HCT116 (cell line): ENCODE measurements at regions of chr5 and their contacts with region 1.

Region 1: DNA sequence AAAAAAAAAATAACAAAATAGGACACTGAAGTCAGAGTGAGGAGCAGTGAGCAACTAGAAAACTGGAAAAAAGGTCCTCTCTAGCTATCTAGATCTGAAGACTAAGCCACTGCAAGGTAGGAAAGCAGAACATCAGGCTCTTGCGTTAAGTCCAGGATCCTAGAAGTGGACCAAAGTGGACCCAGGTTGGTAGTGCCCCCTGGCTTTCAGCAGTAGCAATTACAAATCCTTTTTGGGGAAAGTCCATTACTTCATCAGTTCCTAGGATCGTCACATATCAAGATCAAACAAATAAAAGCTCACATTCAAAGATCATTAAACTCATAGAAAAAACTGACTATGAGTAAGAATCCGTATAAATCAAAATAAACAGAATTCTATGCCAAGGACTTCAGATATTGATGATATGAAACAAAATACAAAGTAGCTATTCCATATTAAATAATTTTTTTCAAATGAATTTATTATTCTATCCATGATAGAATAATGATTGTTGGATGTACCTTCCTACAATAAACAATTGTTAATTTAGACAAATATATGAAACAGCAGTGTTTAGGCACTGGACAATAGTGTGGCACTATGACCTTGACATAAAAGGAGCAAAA is 6.5 kb upstream of the RICTOR start:
- DNase-seq: peak; percentile 60
- ATAC-seq: peak; percentile 78
- H3K4me3 ChIP-seq: no peak overlapping the region
- H3K27ac ChIP-seq: no peak overlapping the region
- H3K4me1 ChIP-seq: peaks cover 7 to 40% of the 10 kb centered on the region in 2 experiments; a peak in 3 of 4 replicates
- H3K27me3 ChIP-seq: no peaks in the 10 kb centered on the region
- CTCF ChIP-seq: peak; percentile 34 to 91 (median 84); a peak in 5 of 6 replicates
- POLR2A ChIP-seq: no peak
- RAD21 ChIP-seq: peak; percentile 63

Region 2: GRCh38 chr5:39092581-39093350 is 12.1 kb after region 1 on chr5:
- CTCF ChIA-PET with region 1: interaction called, 19 read pairs
- POLR2A ChIA-PET with region 1: no interaction called
- RAD21 ChIA-PET with region 1: no interaction called
- intact Hi-C with region 1: no loop called
- DNase-seq: peak; percentile 41
- ATAC-seq: peak; percentile 85
- H3K4me3 ChIP-seq: peak overlapping the region in 1 of 2 experiments; percentile 25; a peak in 2 of 4 replicates
- H3K27ac ChIP-seq: peak overlapping the region; percentile 32; the same call in 1 of the 2 replicates
- H3K4me1 ChIP-seq: peaks cover 12 to 17% of the 10 kb centered on the region in 2 experiments
- H3K27me3 ChIP-seq: no peaks in the 10 kb centered on the region
- CTCF ChIP-seq: no peak
- POLR2A ChIP-seq: no peak
- RAD21 ChIP-seq: no peak

Region 3: DNA sequence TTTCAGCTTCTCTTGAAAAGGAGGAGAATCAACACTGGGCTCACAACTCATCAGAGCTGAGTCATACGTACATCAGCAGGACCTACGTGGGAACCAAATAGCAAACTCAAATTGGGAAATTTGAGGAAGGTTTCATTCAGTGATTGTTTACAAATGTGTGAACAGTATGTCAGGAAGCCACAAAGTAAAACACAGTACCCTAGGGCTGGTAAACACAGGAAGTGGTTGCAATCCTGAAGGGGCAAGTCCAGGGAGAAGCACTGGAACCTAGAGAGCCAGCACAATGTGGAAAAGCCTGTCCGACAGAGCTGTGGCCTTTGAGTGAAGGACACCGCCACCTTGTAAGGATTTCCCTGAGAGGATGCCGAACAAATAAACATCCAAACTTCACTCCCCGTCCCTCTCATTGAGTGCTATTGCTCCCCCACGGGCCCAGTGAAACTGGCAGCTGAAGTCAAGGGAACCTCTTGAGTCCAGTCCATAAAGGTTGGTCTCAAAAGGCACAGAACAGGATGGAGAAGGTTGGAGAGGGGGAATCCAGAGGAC is 20.2 kb after region 1 on chr5:
- CTCF ChIA-PET with region 1: interaction called, 14 read pairs
- POLR2A ChIA-PET with region 1: no interaction called
- RAD21 ChIA-PET with region 1: interaction called in 1 of 2 experiments, 3 read pairs
- intact Hi-C with region 1: no loop called
- DNase-seq: no peak
- ATAC-seq: no peak
- H3K4me3 ChIP-seq: no peak overlapping the region
- H3K27ac ChIP-seq: no peak overlapping the region
- H3K4me1 ChIP-seq: peaks cover 0 to 26% of the 10 kb centered on the region in 2 experiments; a peak in 2 of 4 replicates
- H3K27me3 ChIP-seq: no peaks in the 10 kb centered on the region
- CTCF ChIP-seq: no peak
- POLR2A ChIP-seq: no peak
- RAD21 ChIP-seq: no peak

Region 4: GRCh38 chr5:39294736-39295135 is 214.0 kb after region 1 on chr5:
- CTCF ChIA-PET with region 1: no interaction called
- POLR2A ChIA-PET with region 1: no interaction called
- RAD21 ChIA-PET with region 1: no interaction called
- intact Hi-C with region 1: no loop called
- DNase-seq: no peak
- ATAC-seq: no peak
- H3K4me3 ChIP-seq: no peak overlapping the region
- H3K27ac ChIP-seq: no peak overlapping the region
- H3K4me1 ChIP-seq: no peaks in the 10 kb centered on the region
- H3K27me3 ChIP-seq: no peaks in the 10 kb centered on the region
- CTCF ChIP-seq: no peak
- POLR2A ChIP-seq: no peak
- RAD21 ChIP-seq: no peak